OCI-LY7 (cell line): ENCODE measurements at regions of chr3 and their contacts with region 1.

Region 1: DNA sequence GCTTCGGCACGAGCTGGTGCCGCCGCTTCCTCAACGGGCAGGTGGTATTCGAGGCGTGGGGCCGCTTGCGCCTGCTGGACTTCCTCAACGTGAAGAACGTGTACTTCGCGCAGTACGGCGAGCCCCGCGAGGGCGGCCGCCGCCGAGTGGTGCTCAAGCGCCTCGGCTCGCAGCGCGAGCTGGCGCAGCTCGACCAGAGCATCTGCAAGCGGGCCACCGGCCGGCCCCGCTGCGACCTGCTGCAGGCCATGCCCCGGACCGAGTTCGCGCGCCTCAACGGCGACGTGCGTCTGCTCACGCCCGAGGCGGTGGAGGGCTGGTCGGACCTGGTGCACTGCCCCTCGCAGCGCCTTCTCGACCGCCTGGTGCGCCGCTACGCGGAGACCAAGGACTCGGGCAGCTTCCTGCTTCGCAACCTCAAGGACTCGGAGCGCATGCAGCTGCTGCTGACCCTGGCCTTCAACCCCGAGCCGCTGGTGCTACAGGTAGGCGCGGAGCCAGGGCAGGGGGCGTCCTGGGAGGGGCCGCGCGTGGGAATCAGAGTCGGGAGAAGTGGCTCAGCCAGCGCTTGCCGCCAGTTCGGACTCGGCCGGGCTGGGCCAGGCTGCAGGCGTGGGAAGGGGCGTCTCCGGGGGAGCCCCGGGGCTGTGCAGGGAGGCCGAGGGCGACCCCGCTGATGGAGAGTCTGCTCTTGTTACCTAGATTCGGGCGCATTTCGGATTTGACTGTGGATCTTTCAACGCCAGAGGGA is 1.1 kb downstream of the DIPK2A start:
- DNase-seq: peak; percentile 87
- H3K4me3 ChIP-seq: peak overlapping the region; percentile 89
- H3K27ac ChIP-seq: peak overlapping the region; percentile 94
- H3K4me1 ChIP-seq: peaks cover 31% of the 10 kb centered on the region
- CTCF ChIP-seq: peak; percentile 67

Region 2: DNA sequence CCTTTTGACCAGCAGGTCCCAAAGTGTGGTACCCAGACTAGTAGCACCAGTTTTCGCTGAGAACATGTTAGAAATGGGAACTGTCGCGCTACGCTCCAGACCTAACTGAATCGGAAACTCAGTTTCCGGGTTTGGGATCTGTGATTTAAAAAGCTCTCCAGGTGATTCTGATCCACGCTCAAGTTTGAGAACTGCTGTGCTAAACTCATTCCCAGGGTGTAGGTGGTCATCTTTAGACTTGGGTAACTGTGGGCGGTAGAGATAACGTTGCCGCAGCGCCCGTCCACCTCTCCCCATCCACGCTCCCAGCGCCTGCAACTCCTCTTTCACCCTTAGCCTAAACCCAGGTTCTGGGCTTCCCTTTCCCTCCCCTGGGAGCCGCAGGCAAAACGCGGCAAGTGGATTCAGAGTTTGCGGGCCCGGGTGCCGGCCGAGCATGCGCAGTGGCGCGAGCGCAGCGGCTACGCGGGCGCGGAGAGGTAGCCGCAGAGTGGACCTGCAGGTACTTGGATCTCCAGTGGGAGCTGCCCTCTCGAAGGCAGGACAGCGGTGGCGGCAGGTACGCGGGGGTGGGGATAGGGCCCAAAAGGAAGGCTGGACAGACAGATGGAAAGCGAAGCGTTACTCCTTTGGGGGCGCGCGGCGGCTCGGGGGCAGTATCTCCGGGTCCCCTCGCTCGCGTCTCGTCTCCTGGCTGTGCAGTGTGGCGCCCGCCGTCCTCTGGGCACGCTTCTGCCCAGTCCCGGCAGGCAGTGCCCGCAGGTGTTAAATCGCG is 1376.5 kb before region 1 on chr3 and contains the start of gene PLS1:
- CTCF ChIA-PET with region 1: no interaction called
- POLR2A ChIA-PET with region 1: no interaction called
- intact Hi-C with region 1: loop called (anchors 10 kb)
- DNase-seq: peak; percentile 89
- H3K4me3 ChIP-seq: peak within 1 kb of the TSS; percentile 83
- H3K27ac ChIP-seq: peak within 1 kb of the TSS; percentile 9
- H3K4me1 ChIP-seq: peaks cover 21% of the 10 kb centered on the region
- CTCF ChIP-seq: no peak
- total RNA-seq, gene PLS1: 4.0 and 5.6 TPM in 2 replicates

Region 3: DNA sequence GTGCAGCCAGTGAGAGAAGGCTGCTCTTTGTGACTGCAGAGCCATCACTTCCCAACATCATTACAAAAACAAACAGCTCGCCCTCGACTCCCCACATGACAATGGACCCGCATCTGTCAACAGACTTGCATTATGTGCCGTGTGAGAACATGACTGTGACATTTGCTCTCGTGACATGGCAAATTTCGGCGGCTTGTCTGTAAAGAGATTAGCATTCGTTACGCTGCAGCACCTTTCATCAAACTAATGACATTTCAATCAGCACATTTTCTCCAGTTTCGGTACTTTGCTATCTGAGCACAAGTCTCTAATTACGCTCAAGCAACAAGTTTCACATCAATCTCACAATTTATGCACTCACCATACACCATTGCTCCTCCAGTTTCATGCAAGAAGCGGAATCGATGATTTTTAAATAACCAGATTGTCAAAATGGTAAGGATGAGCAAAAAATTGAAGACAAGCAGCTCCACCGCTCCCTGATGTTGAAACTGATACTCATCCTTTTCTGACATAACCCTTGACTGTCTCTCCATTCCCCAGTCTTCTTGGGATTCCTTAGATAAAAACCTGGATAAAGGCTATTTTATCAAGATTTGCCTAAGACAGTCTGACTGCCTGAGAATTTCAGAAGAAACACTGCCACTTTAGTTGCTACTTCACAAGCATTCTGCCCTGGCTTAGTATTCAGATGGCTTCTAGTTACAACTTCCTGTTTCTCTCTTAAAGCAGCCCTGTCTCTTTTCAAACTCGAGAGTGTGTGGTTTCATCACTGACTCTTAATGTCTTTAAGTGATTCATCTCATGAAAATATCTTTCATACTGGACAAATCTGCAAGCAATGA is 124.7 kb before region 1 on chr3 and contains the start of gene SLC9A9:
- CTCF ChIA-PET with region 1: no interaction called
- POLR2A ChIA-PET with region 1: interaction called, 23 read pairs
- intact Hi-C with region 1: loop called (anchors 2 kb)
- DNase-seq: peak; percentile 75
- H3K4me3 ChIP-seq: peak within 1 kb of the TSS; percentile 78
- H3K27ac ChIP-seq: peak within 1 kb of the TSS; percentile 8
- H3K4me1 ChIP-seq: peaks cover 22% of the 10 kb centered on the region
- CTCF ChIP-seq: no peak
- total RNA-seq, gene SLC9A9: 7.7 and 14.8 TPM in 2 replicates

Region 4: GRCh38 chr3:143991713-143992112 is 19.0 kb after region 1 on chr3:
- CTCF ChIA-PET with region 1: no interaction called
- POLR2A ChIA-PET with region 1: interaction called, 24 read pairs
- intact Hi-C with region 1: no loop called
- DNase-seq: no peak
- H3K4me3 ChIP-seq: no peak overlapping the region
- H3K27ac ChIP-seq: no peak overlapping the region
- H3K4me1 ChIP-seq: peaks cover 12% of the 10 kb centered on the region
- CTCF ChIP-seq: no peak

Region 5: GRCh38 chr3:144308396-144308795 is 335.7 kb after region 1 on chr3:
- CTCF ChIA-PET with region 1: no interaction called
- POLR2A ChIA-PET with region 1: no interaction called
- intact Hi-C with region 1: no loop called
- DNase-seq: no peak
- H3K4me3 ChIP-seq: no peak overlapping the region
- H3K27ac ChIP-seq: no peak overlapping the region
- H3K4me1 ChIP-seq: no peaks in the 10 kb centered on the region
- CTCF ChIP-seq: no peak